ENCODE measurements at regions of chr14 and their contacts with region 1.

Region 1: GRCh38 chr14:70821584-70822529 is 12.5 kb upstream of the MAP3K9 start:
- DNase-seq: peak in 1 of 2 donors; percentile 74
- H3K4me3 ChIP-seq: peak overlapping the region; percentile 84 to 86
- H3K27ac ChIP-seq: no peak overlapping the region
- H3K4me1 ChIP-seq: peaks cover 0 to 11% of the 10 kb centered on the region in 2 donors
- H3K27me3 ChIP-seq: no peaks in the 10 kb centered on the region
- CTCF ChIP-seq: no peak

Region 2: GRCh38 chr14:70972107-70972976 is 150.5 kb after region 1 on chr14:
- intact Hi-C with region 1: loop called (anchors 1 kb)
- DNase-seq: peak in 1 of 2 donors; percentile 93
- H3K4me3 ChIP-seq: no peak overlapping the region
- H3K27ac ChIP-seq: no peak overlapping the region
- H3K4me1 ChIP-seq: no peaks in the 10 kb centered on the region
- H3K27me3 ChIP-seq: no peaks in the 10 kb centered on the region
- CTCF ChIP-seq: peak; percentile 64 to 90 (median 88)

Measured in ascending aorta (tissue), 2 donors.